IMR-90 (cell line): ENCODE measurements at regions of chr7 and their contacts with region 1.

Region 1: DNA sequence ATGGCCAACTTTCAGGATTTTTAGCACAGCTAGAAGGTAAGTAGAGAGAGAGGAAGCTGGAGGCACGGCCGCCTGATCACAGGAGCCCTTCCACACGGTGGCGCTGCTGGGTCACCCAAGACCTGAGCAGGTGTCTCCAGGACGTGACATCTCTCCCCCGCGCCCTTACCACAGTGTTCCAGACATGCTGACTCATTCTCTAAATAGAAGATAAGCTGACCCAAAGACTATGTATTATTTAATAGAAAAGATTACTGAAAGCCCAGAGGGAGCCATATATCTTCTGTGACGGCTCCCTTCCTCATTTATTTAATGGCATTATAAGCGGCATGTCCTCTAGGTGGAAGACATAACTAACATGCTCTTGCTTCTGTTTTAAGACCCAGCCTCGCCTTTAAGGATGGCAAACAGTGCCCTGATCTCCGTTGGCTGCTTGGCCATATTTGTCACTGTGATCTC is 26.0 kb upstream of the MALSU1 start:
- DNase-seq: peak; percentile 96
- ATAC-seq: peak; percentile 92
- H3K4me3 ChIP-seq: no peak overlapping the region
- H3K27ac ChIP-seq: no peak overlapping the region
- H3K4me1 ChIP-seq: peaks cover 2% of the 10 kb centered on the region; the same call in 1 of the 2 replicates
- H3K27me3 ChIP-seq: peaks cover 17% of the 10 kb centered on the region
- CTCF ChIP-seq: peak; percentile 86
- POLR2A ChIP-seq: no peak
- RAD21 ChIP-seq: peak; percentile 80

Region 2: DNA sequence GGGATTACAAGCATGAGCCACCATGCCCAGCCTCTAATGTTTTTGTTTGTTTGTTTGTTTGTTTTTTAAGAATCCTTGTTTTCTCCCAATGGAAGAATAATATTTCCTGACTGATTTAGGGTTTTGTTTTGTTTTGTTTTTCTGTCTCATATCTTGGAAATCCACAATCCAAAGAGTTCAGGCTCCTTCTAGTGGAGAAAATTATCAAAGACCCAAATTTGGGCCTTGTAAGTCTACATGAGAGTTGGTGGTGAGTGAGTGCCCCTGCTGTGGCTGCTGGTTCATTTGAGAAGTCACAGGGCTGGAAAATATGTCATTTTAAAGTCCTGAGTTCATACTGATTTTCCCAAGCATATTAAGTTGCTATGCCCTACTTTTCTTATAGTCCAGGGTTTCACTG is 201.1 kb before region 1 on chr7:
- CTCF ChIA-PET with region 1: no interaction called
- POLR2A ChIA-PET with region 1: no interaction called
- dilution Hi-C with region 1: no loop called
- in situ Hi-C with region 1: no loop called
- intact Hi-C with region 1: no loop called
- DNase-seq: peak; percentile 28
- ATAC-seq: peak; percentile 55; the same call in 1 of the 2 replicates
- H3K4me3 ChIP-seq: no peak overlapping the region
- H3K27ac ChIP-seq: no peak overlapping the region
- H3K4me1 ChIP-seq: peaks cover 5% of the 10 kb centered on the region
- H3K27me3 ChIP-seq: no peaks in the 10 kb centered on the region
- CTCF ChIP-seq: peak; percentile 43
- POLR2A ChIP-seq: no peak
- RAD21 ChIP-seq: peak; percentile 39; the same call in 1 of the 2 replicates

Region 3: DNA sequence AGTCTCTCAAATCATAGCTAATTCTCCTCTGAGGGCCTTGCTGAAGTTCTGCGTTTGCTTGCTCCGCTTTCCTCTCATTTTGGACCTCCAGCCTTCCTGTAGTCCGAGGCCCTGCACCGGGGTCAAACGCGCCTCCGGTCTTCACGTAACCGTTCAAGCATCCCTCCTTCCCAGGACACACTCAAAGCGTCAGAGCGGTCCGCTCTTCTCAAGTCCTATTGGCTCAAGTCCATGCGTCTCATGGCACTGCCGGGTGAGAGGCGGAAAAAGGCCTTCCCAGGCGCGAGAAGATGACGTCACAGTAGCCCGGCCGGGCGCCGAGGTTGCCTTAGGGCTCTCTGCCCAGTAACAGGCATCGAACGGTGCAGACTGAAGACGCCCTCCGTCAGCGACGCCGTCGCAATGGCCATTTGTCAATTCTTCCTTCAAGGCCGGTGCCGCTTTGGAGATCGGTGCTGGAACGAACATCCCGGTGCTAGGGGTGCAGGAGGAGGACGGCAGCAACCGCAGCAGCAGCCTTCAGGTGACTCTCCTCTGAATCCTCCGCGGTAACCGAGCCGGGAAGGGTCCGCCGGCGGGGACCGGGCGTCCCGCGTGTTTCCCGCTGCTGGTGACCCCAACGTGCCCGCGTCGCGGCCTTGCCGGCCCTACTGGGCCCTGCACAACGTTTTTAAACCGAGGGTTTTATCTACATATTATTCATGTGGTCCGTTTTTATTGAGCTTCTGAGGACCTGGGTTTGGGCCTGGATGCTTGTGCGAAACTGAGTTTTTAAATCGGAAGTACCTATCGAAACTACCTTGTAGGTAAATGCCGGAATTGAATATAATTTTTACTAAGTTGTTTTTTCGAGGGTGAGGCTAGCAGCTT is 91.3 kb before region 1 on chr7 and contains the start of gene NUP42:
- CTCF ChIA-PET with region 1: no interaction called
- POLR2A ChIA-PET with region 1: no interaction called
- dilution Hi-C with region 1: no loop called
- in situ Hi-C with region 1: no loop called
- intact Hi-C with region 1: loop called (anchors 1 kb)
- DNase-seq: peak; percentile 100
- ATAC-seq: peak; percentile 96
- H3K4me3 ChIP-seq: peak within 1 kb of the TSS; percentile 82
- H3K27ac ChIP-seq: peak within 1 kb of the TSS; percentile 85
- H3K4me1 ChIP-seq: no peaks in the 10 kb centered on the region
- H3K27me3 ChIP-seq: no peaks in the 10 kb centered on the region
- CTCF ChIP-seq: no peak
- POLR2A ChIP-seq: peak; percentile 72
- RAD21 ChIP-seq: no peak
- total RNA-seq, gene NUP42: 17.2 and 22.6 TPM in 2 replicates

Region 4: GRCh38 chr7:23299770-23300300 is 26.7 kb after region 1 on chr7:
- CTCF ChIA-PET with region 1: interaction called, 10 read pairs
- POLR2A ChIA-PET with region 1: no interaction called
- dilution Hi-C with region 1: no loop called
- in situ Hi-C with region 1: no loop called
- intact Hi-C with region 1: no loop called
- DNase-seq: peak; percentile 35
- ATAC-seq: peak; percentile 8
- H3K4me3 ChIP-seq: peak overlapping the region; percentile 85
- H3K27ac ChIP-seq: peak overlapping the region; percentile 85
- H3K4me1 ChIP-seq: peaks cover 5% of the 10 kb centered on the region
- H3K27me3 ChIP-seq: no peaks in the 10 kb centered on the region
- CTCF ChIP-seq: no peak
- POLR2A ChIP-seq: no peak
- RAD21 ChIP-seq: no peak

Region 5: DNA sequence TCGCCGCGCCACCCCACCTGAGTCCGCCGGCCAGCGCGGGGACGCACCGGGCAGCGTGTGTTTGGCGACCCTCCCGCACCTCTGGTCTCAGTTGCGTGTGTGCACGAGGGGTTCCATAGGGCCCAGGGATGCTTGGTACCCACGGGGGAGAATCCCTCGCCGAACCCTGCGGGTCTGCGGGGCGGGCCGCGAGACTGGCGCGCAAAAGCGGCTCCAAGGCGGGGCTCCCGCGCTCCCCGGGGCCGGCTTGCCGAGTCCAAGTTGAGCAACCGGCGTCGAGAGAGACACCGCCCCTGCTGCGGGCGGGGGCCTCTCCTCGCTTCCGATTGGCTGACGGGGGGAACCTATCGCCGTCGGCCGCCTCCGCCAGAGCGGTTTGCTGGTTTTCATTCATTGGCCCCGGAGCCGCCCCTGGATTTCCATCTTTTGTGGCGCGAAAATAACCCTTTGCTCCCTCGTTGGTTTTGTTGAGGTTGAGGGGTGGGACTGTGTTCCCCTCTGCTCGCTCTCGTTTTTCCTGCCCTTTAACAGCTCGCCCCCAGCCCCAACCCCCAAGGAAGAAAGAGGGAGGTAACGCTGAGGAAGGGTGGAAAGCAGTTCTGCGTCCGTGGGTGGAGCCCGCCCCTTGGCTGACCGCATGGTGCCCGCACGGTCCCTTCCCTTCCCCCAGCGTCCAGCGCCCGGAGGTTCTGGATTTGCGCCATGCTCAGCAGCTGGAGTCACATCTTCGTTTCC is 201.1 kb after region 1 on chr7:
- CTCF ChIA-PET with region 1: interaction called, 3 read pairs
- POLR2A ChIA-PET with region 1: no interaction called
- dilution Hi-C with region 1: no loop called
- in situ Hi-C with region 1: no loop called
- intact Hi-C with region 1: loop called (anchors 5 kb)
- DNase-seq: peak; percentile 95
- ATAC-seq: peak; percentile 66
- H3K4me3 ChIP-seq: peak overlapping the region; percentile 83
- H3K27ac ChIP-seq: peak overlapping the region; percentile 81
- H3K4me1 ChIP-seq: peaks cover 2% of the 10 kb centered on the region; the same call in 1 of the 2 replicates
- H3K27me3 ChIP-seq: no peaks in the 10 kb centered on the region
- CTCF ChIP-seq: no peak
- POLR2A ChIP-seq: peak; percentile 54
- RAD21 ChIP-seq: no peak

Region 6: DNA sequence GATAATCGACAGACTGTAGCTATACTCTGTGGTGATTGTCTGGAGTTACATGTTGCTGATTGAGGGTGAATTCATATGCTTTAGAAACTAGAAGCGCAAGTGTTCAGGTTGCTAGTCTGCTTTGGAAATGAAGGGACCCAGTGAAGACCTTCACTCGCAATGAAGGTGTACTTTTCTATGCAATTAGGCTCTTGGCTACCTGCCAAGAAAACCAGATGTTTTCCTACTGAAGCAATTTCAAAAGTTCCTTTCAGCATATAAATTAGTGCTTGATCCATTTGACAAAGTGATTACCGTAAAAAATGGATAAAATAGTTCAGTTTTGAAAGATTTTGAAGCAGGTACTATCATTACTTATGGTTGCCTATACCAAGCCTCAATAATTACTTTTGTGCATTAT is 426.9 kb after region 1 on chr7:
- CTCF ChIA-PET with region 1: no interaction called
- POLR2A ChIA-PET with region 1: no interaction called
- dilution Hi-C with region 1: no loop called
- in situ Hi-C with region 1: loop called (anchors 10 kb)
- intact Hi-C with region 1: no loop called
- DNase-seq: no peak
- ATAC-seq: no peak
- H3K4me3 ChIP-seq: no peak overlapping the region
- H3K27ac ChIP-seq: no peak overlapping the region
- H3K4me1 ChIP-seq: no peaks in the 10 kb centered on the region; the same call in 1 of the 2 replicates
- H3K27me3 ChIP-seq: no peaks in the 10 kb centered on the region
- CTCF ChIP-seq: no peak
- POLR2A ChIP-seq: no peak
- RAD21 ChIP-seq: no peak